ENCODE measurements at regions of chrX and their contacts with region 1.

Region 1: DNA sequence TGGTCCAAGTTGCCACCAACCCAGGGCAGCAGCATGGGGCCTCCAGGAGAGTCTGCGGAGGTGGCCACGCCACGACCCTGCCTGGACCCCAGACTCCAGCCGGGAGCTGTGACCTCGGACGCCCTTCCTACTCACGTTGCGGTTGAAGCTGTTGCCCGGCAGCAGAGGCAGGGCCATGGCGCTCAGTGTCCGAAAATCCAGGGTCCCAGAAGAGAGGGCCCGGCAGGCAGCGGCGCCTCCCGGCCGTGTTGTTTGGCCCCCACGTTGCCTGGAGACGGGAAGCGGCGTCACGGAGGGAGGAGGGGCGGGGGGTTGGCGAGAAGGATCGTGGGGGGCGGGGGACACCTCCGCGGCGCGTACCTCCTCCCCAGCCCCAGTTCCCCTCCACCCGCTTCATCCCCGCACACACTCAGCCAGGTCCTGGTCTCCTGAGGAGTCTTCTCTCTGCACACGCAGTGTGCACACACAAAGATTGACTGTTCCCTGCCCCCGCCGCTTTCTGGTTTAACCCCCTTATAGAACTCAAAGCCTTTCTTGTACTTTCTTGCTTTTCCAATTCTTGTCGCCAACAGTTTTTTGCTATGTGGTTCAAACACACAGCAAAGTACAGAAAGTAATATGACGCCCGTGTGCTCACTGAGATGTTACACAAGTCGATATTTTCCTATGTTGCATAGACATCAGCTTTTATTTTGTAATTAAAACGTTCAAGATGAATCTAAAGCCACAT is at the start of gene EFHC2:
- DNase-seq: peak; percentile 27 to 82 (median 52)
- ATAC-seq: peak; percentile 54
- H3K4me3 ChIP-seq: peak within 1 kb of the TSS; percentile 65
- H3K4me3 Mint-ChIP-seq: peak within 1 kb of the TSS; percentile 95
- H3K27ac ChIP-seq: peak within 1 kb of the TSS; percentile 65 to 92
- H3K27ac Mint-ChIP-seq: peak within 1 kb of the TSS; percentile 95
- H3K4me1 ChIP-seq: peaks cover 18% of the 10 kb centered on the region
- H3K4me1 Mint-ChIP-seq: peaks cover 43% of the 10 kb centered on the region
- H3K27me3 ChIP-seq: no peaks in the 10 kb centered on the region
- H3K27me3 Mint-ChIP-seq: no peaks in the 10 kb centered on the region
- CTCF ChIP-seq: no peak
- total RNA-seq, gene EFHC2: 2.7 to 3.0 TPM

Region 2: DNA sequence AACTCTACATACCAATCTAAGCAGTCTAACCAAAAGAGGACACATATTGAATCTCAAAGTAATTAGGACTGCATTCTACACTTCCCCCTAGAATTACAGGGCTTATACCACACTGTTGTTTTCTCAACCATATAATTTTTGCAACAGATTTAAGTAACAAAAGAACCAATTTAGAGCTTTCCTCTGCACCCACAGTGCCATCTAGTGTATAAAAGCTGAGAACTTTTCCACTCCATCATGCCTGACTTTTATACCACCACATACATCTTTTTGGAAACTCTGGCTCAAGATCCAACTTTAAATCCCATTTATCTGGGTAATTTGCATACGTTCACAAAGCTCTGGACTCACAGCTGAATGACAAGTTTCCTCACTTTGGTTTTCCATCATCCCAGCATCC is 99.6 kb before region 1 on chrX:
- CTCF ChIA-PET with region 1: interaction called, 3 read pairs
- POLR2A ChIA-PET with region 1: interaction called, 7 read pairs
- intact Hi-C with region 1: loop called in 1 of 2 experiments (anchors 5 kb)
- DNase-seq: peak in 4 of 14 experiments; percentile 20 to 53 (median 48)
- ATAC-seq: no peak
- H3K4me3 ChIP-seq: no peak overlapping the region
- H3K4me3 Mint-ChIP-seq: no peak overlapping the region
- H3K27ac ChIP-seq: no peak overlapping the region
- H3K27ac Mint-ChIP-seq: peak overlapping the region; percentile 53
- H3K4me1 ChIP-seq: peaks cover 7% of the 10 kb centered on the region
- H3K4me1 Mint-ChIP-seq: peaks cover 39% of the 10 kb centered on the region
- H3K27me3 ChIP-seq: no peaks in the 10 kb centered on the region
- H3K27me3 Mint-ChIP-seq: no peaks in the 10 kb centered on the region
- CTCF ChIP-seq: peak; percentile 65

Region 3: DNA sequence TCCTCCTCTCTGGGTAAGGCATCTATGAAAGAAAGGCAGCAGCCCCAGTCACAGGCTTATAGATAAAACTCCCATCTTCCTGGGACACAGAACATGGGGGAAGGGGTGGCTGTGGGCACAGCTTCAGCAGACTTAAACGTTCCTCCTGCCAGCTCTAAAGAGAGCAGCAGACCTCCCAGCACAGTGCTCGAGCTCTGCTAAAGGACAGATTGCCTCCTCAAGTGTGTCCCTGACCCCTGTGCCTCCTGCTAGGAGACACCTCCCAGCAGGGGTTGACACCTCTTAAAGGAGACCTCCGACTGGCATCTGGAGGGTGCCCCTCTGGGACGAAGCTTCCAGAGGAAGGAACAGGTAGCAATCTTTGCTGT is 90.0 kb before region 1 on chrX:
- CTCF ChIA-PET with region 1: no interaction called
- POLR2A ChIA-PET with region 1: interaction called, 10 read pairs
- intact Hi-C with region 1: loop called in 1 of 2 experiments (anchors 5 kb)
- DNase-seq: no peak
- ATAC-seq: no peak
- H3K4me3 ChIP-seq: peak overlapping the region; percentile 19
- H3K4me3 Mint-ChIP-seq: peak overlapping the region; percentile 81
- H3K27ac ChIP-seq: peak overlapping the region; percentile 62
- H3K27ac Mint-ChIP-seq: peak overlapping the region; percentile 92
- H3K4me1 ChIP-seq: peaks cover 15% of the 10 kb centered on the region
- H3K4me1 Mint-ChIP-seq: peaks cover 38% of the 10 kb centered on the region
- H3K27me3 ChIP-seq: no peaks in the 10 kb centered on the region
- H3K27me3 Mint-ChIP-seq: no peaks in the 10 kb centered on the region
- CTCF ChIP-seq: no peak

Region 4: DNA sequence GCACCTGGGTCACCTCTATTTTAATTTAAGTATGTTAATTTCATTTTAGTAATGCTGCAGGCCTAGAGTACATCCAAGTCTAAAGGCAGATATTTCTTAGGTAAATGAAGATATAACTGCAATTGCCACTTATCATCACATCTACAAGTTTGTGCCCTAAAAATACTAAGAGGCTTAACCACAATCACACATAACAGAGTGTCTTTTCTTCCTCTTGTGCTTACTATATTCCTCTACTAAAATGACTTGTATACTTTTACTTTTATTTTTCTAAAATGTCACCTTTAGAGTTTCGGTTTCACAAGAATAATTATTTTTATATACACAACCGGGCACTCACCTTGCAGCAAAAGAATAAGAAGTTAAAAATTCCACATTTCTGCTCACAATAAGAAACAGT is 78.0 kb before region 1 on chrX:
- CTCF ChIA-PET with region 1: no interaction called
- POLR2A ChIA-PET with region 1: no interaction called
- intact Hi-C with region 1: loop called in 1 of 2 experiments (anchors 10 kb)
- DNase-seq: peak in 2 of 14 experiments; percentile 4 to 51
- ATAC-seq: peak; percentile 49
- H3K4me3 ChIP-seq: no peak overlapping the region
- H3K4me3 Mint-ChIP-seq: peak overlapping the region; percentile 74
- H3K27ac ChIP-seq: no peak overlapping the region
- H3K27ac Mint-ChIP-seq: peak overlapping the region; percentile 68
- H3K4me1 ChIP-seq: peaks cover 15% of the 10 kb centered on the region
- H3K4me1 Mint-ChIP-seq: peaks cover 38% of the 10 kb centered on the region
- H3K27me3 ChIP-seq: no peaks in the 10 kb centered on the region
- H3K27me3 Mint-ChIP-seq: no peaks in the 10 kb centered on the region
- CTCF ChIP-seq: no peak

Region 5: GRCh38 chrX:44542567-44543325 is 199.2 kb after region 1 on chrX and contains the start of gene FUNDC1:
- CTCF ChIA-PET with region 1: no interaction called
- POLR2A ChIA-PET with region 1: interaction called, 3 read pairs
- intact Hi-C with region 1: loop called in 1 of 2 experiments (anchors 5 kb)
- DNase-seq: peak; percentile 77 to 97 (median 90)
- ATAC-seq: peak; percentile 94
- H3K4me3 ChIP-seq: peak within 1 kb of the TSS; percentile 88
- H3K4me3 Mint-ChIP-seq: peak within 1 kb of the TSS; percentile 100
- H3K27ac ChIP-seq: peak within 1 kb of the TSS; percentile 46 to 54
- H3K27ac Mint-ChIP-seq: peak within 1 kb of the TSS; percentile 97
- H3K4me1 ChIP-seq: peaks cover 9% of the 10 kb centered on the region
- H3K4me1 Mint-ChIP-seq: peaks cover 37% of the 10 kb centered on the region
- H3K27me3 ChIP-seq: no peaks in the 10 kb centered on the region
- H3K27me3 Mint-ChIP-seq: no peaks in the 10 kb centered on the region
- CTCF ChIP-seq: no peak
- total RNA-seq, gene FUNDC1: 4.8 to 5.4 TPM